ENCODE measurements at regions of chr1 and their contacts with region 1.

Region 1: GRCh38 chr1:111222308-111223125 is 5.0 kb upstream of the CHI3L2 start:
- DNase-seq: peak; percentile 81
- H3K4me3 Mint-ChIP-seq: no peak overlapping the region
- H3K27ac Mint-ChIP-seq: peak overlapping the region; percentile 36
- H3K4me1 Mint-ChIP-seq: peaks cover 31% of the 10 kb centered on the region
- H3K27me3 Mint-ChIP-seq: no peaks in the 10 kb centered on the region
- CTCF ChIP-seq: peak; percentile 93

Region 2: DNA sequence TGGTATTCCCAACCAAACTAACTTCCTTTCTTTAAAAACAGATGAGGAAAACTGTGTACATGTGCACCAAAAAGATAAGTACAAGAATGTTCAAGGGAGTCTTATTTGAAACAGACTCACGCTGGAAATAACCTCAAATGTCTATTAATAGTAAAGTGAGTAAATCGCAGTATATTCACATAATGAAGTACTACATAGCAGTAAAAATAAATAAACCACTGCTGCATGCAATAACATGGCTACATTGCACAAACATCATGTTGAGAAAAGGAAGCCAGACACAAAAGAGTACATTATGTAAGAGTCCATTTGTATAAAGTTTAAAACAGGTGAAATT is 16.8 kb before region 1 on chr1:
- CTCF ChIA-PET with region 1: interaction called, 17 read pairs
- POLR2A ChIA-PET with region 1: no interaction called
- intact Hi-C with region 1: no loop called
- DNase-seq: peak; percentile 40
- H3K4me3 Mint-ChIP-seq: no peak overlapping the region
- H3K27ac Mint-ChIP-seq: no peak overlapping the region
- H3K4me1 Mint-ChIP-seq: peaks cover 5% of the 10 kb centered on the region
- H3K27me3 Mint-ChIP-seq: peaks cover 12% of the 10 kb centered on the region
- CTCF ChIP-seq: no peak

Region 3: DNA sequence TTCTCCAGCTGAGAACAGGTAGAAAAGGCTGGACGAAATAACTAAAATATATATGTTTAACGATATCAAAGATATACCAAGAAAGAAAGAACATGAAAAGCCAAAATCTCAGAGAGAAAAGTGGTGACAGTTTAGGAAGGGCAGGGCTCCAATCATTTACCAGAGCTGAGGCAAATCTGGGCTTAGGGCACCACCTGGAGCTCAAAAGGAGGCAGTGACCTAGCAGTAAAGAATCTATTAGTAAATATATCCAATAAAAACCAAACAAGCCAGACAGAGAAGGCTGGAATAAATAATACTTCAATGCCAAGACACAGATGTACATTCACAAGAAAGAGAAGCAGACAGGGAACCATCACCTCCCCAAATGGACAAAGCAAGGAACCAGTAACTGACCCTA is 111.7 kb after region 1 on chr1:
- CTCF ChIA-PET with region 1: interaction called, 62 read pairs
- POLR2A ChIA-PET with region 1: interaction called, 8 read pairs
- intact Hi-C with region 1: loop called (anchors 1 kb)
- DNase-seq: peak; percentile 59
- H3K4me3 Mint-ChIP-seq: no peak overlapping the region
- H3K27ac Mint-ChIP-seq: no peak overlapping the region
- H3K4me1 Mint-ChIP-seq: no peaks in the 10 kb centered on the region
- H3K27me3 Mint-ChIP-seq: no peaks in the 10 kb centered on the region
- CTCF ChIP-seq: peak; percentile 68

Region 4: DNA sequence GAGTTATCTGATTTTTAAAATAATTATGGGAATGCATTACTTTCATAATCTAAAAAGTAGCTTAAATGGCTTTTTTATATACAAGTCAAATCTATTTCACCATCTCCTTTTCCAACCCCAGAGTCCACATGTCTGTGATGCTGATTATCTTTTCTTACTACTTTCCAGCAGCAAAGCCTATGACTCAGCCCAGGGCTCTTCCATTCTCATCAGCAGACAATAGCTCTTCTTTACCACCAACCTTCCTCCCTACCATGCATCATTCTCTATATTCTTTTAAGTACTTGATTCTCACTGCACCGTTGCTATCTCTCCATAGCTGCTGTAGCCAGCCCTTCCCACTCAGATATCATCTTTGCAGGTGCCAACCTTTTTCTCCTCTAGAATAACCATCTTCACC is 143.7 kb after region 1 on chr1:
- CTCF ChIA-PET with region 1: interaction called, 13 read pairs
- POLR2A ChIA-PET with region 1: no interaction called
- intact Hi-C with region 1: no loop called
- DNase-seq: peak; percentile 8
- H3K4me3 Mint-ChIP-seq: no peak overlapping the region
- H3K27ac Mint-ChIP-seq: no peak overlapping the region
- H3K4me1 Mint-ChIP-seq: peaks cover 12% of the 10 kb centered on the region
- H3K27me3 Mint-ChIP-seq: no peaks in the 10 kb centered on the region
- CTCF ChIP-seq: no peak

Region 5: DNA sequence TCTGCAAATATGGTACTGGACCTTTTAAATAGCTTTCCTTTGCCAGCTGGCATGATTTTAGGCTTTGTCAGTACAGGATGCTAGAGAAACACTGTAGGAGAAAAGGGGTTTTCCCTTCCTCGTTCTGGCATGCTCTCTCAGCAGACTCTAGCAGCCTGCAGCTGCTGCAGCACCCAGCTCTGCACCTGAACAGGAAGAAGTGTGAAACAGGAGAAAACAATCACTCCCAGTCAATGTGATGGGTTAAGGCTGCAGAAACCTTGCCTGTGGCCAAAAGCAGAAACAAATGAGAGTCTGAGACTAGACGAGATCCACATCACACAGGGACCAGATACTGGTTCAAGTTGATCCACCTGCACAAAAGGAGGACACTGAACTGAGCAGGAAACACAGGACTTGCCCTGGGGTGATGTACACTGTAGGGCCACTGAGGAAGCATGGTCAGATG is 183.8 kb after region 1 on chr1:
- CTCF ChIA-PET with region 1: interaction called, 95 read pairs
- POLR2A ChIA-PET with region 1: interaction called, 4 read pairs
- intact Hi-C with region 1: no loop called
- DNase-seq: peak; percentile 65
- H3K4me3 Mint-ChIP-seq: no peak overlapping the region
- H3K27ac Mint-ChIP-seq: no peak overlapping the region
- H3K4me1 Mint-ChIP-seq: peaks cover 6% of the 10 kb centered on the region
- H3K27me3 Mint-ChIP-seq: peaks cover 25% of the 10 kb centered on the region
- CTCF ChIP-seq: no peak

Measured in MCF 10A (cell line).